Sigmoid colon (tissue), 7 donors: ENCODE measurements at regions of chr2 and their contacts with region 1.

Region 1: GRCh38 chr2:221573430-221574230 is 1.5 kb upstream of the EPHA4 start:
- DNase-seq: peak; percentile 91
- H3K4me3 ChIP-seq: peak overlapping the region; percentile 66 to 93 (median 78)
- H3K27ac ChIP-seq: peak overlapping the region; percentile 87 to 93 (median 92)
- H3K4me1 ChIP-seq: peaks cover 0 to 39% (median 25%) of the 10 kb centered on the region in 4 donors
- H3K27me3 ChIP-seq: peaks cover 0 to 17% (median 0%) of the 10 kb centered on the region in 3 donors
- CTCF ChIP-seq: peak; percentile 93 to 99 (median 98)
- EP300 ChIP-seq: no peak
- POLR2A ChIP-seq: no peak

Region 2: DNA sequence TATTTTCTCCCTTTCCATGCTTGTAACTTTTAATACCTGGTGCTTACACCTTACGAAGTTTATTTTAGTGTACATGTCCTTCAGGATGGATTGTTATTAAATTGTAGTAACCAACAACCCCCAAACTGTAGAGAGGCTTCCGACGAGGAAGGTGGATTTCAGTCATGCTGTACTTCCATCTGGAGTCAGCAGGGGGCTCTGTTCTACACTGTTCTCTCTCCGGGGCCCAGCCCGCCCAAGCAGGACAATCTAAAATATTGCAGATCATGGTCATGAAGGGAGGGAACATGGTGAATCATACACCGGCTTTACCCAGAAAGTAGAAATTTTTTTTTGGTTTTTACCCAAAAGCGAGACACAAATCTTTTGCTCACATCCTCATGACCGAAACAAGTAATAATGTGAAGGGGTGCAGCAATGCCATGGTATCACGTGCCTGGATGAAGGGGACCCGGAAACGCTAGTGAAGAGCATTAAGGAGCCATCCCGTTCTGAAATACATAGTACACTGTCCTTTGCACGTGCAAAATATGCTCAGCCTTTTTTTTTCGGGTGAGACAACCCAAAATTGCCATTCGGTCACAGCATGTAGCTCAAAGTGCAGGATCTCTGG is 886.3 kb before region 1 on chr2:
- intact Hi-C with region 1: loop called (anchors 1 kb)
- DNase-seq: peak; percentile 86
- H3K4me3 ChIP-seq: no peak overlapping the region
- H3K27ac ChIP-seq: no peak overlapping the region
- H3K4me1 ChIP-seq: no peaks in the 10 kb centered on the region
- H3K27me3 ChIP-seq: no peaks in the 10 kb centered on the region
- CTCF ChIP-seq: peak; percentile 26 to 87 (median 86)
- EP300 ChIP-seq: no peak
- POLR2A ChIP-seq: no peak

Region 3: DNA sequence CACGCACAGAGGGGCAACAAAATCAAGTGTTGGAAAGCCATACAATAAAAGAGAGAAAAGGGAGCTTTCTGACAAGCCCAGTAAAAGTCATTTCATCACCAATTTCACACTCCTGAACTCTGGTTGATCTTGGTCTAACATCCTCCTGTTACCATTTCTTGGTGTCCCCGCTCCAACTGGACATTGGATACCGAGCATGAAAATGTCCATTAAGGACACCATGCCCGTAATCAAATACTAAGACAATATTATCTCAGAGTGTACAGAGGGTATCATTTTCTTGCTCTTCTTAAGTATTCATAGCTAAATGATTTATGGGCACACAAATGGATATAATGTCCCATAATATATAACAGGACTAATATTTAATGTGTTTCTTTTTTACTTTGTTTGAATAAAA is 220.4 kb before region 1 on chr2:
- intact Hi-C with region 1: loop called (anchors 2 kb)
- DNase-seq: no peak
- H3K4me3 ChIP-seq: no peak overlapping the region
- H3K27ac ChIP-seq: no peak overlapping the region
- H3K4me1 ChIP-seq: peaks cover 0 to 35% (median 20%) of the 10 kb centered on the region in 4 donors
- H3K27me3 ChIP-seq: no peaks in the 10 kb centered on the region
- CTCF ChIP-seq: no peak
- EP300 ChIP-seq: no peak
- POLR2A ChIP-seq: no peak

Region 4: GRCh38 chr2:221429741-221430491 is 143.7 kb before region 1 on chr2:
- intact Hi-C with region 1: loop called (anchors 5 kb)
- DNase-seq: peak; percentile 88
- H3K4me3 ChIP-seq: no peak overlapping the region
- H3K27ac ChIP-seq: peak overlapping the region in 3 of 4 donors; percentile 33 to 70 (median 38)
- H3K4me1 ChIP-seq: peaks cover 0 to 11% (median 8%) of the 10 kb centered on the region in 4 donors
- H3K27me3 ChIP-seq: no peaks in the 10 kb centered on the region
- CTCF ChIP-seq: no peak
- EP300 ChIP-seq: no peak
- POLR2A ChIP-seq: no peak

Region 5: GRCh38 chr2:221969087-221969829 is 395.6 kb after region 1 on chr2:
- intact Hi-C with region 1: loop called (anchors 1 kb)
- DNase-seq: no peak
- H3K4me3 ChIP-seq: no peak overlapping the region
- H3K27ac ChIP-seq: no peak overlapping the region
- H3K4me1 ChIP-seq: peaks cover 0 to 6% (median 0%) of the 10 kb centered on the region in 4 donors
- H3K27me3 ChIP-seq: no peaks in the 10 kb centered on the region
- CTCF ChIP-seq: peak; percentile 37 to 67 (median 60)
- EP300 ChIP-seq: no peak
- POLR2A ChIP-seq: no peak